ENCODE measurements at regions of chr1 and their contacts with region 1.

Region 1: GRCh38 chr1:15152318-15153183 is 996 bp upstream of the TMEM51 start:
- DNase-seq: peak; percentile 70 to 96
- H3K4me3 ChIP-seq: peak overlapping the region; percentile 36
- CTCF ChIP-seq: peak in 1 of 3 donors; percentile 26
- POLR2A ChIP-seq: no peak

Region 2: GRCh38 chr1:15272009-15272788 is 119.6 kb after region 1 on chr1:
- intact Hi-C with region 1: loop called (anchors 10 kb)
- DNase-seq: peak; percentile 55 to 81
- H3K4me3 ChIP-seq: no peak overlapping the region
- CTCF ChIP-seq: peak in 1 of 3 donors; percentile 61
- POLR2A ChIP-seq: no peak

Measured in lower leg skin (tissue), 4 donors.